ENCODE measurements at regions of chr17 and their contacts with region 1.

Region 1: DNA sequence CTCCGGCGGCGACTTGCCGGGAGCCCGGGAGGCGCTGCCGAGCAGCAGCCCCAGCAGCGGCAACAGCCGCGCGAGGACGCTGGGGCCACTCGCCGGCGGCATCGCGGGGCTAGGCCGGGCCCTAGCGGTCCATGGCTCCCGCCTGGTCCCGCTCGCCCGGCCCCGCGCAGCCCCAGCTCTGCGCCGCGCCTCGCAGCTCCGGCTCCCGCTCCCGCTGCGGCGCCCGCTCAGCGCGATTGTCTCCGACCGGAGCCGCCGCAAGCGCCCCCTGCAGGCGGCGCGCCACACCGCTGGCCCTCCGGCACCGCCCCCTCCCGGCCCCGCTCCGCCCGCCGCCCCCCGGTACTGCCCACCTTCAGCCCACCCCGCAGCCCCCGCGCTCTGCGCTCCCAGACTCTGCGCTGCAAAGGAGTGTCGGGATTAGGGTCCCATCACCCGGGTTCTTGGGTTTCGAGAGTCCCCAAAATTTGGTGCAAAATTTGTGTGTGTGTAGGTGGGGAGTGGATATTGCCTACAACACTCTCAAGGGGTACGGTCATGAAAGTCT is at the start of gene FAM171A2:
- DNase-seq: peak; percentile 62
- H3K4me3 Mint-ChIP-seq: peak within 1 kb of the TSS; percentile 69
- H3K27ac Mint-ChIP-seq: no peak within 1 kb of the TSS
- H3K4me1 Mint-ChIP-seq: peaks cover 1% of the 10 kb centered on the region
- H3K27me3 Mint-ChIP-seq: peaks cover 40% of the 10 kb centered on the region
- total RNA-seq, gene FAM171A2: 0.08 TPM in 1 of 2 experiments, not detected in the other

Region 2: DNA sequence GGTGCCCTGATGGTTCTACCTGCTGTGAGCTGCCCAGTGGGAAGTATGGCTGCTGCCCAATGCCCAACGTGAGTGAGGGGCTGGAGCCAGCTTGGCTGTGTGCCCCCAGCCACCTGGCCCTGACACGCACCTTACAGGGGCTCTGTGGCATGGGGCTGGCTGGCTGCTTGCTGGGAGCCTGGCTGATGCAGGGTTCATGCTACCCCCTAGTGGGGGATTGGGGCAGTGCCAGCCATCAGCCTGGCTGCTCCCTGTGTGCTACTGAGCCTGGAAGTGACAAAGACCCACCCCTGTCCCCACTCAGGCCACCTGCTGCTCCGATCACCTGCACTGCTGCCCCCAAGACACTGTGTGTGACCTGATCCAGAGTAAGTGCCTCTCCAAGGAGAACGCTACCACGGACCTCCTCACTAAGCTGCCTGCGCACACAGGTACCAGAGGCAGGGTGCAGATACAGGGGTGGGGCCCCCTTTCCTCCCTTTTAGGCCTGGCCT is 12.9 kb before region 1 on chr17:
- CTCF ChIA-PET with region 1: interaction called, 39 read pairs
- POLR2A ChIA-PET with region 1: no interaction called
- DNase-seq: peak; percentile 76
- H3K4me3 Mint-ChIP-seq: no peak overlapping the region
- H3K27ac Mint-ChIP-seq: no peak overlapping the region
- H3K4me1 Mint-ChIP-seq: peaks cover 24% of the 10 kb centered on the region
- H3K27me3 Mint-ChIP-seq: peaks cover 8% of the 10 kb centered on the region

Measured in activated CD4-positive, alpha-beta T cell treated with anti-CD3 and anti-CD28 coated beads, Interleukin-2, amount 10 ng/mL, durations not matched to agents 7 days and 5 days (primary cell).